ENCODE measurements at regions of chr19 and their contacts with region 1.

Region 1: DNA sequence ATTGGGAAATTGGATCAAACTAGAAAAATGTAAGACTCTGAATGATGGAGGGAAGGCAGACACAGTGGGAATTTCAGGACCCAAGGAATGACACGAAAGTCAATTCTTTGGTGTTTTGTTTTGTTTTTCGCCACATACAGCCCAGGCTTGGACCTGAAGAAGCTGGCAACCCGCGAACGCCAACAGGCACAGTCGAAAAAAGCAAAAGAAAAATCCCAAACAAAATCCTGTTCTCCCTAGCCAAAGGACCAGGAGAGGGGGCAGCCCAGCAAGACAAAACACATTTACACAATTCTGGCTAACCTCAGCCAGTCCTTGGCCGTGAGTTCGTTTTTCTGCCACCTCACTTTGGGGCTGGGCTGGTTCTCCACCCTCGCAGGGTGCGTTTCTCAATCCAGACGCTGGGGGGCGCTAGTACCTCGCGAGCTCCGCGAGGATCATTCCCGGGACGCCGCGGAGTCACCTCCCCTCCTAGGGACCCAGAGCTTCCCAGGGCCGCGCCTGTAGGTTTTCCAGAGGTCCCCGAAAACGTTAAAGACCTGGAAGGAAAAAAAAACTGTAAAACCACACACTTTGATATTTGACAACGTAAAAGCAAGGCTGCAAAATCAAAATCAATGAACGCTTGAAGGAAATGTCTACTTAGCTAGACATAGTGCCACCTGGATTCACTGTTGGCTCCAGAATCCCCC is 34.9 kb upstream of the TPM4 start:
- DNase-seq: peak; percentile 86
- CTCF ChIP-seq: peak; percentile 94

Region 2: GRCh38 chr19:15629003-15629880 is 412.2 kb before region 1 on chr19:
- in situ Hi-C with region 1: loop called (anchors 25 kb)
- DNase-seq: peak; percentile 90
- CTCF ChIP-seq: peak; percentile 94

Region 3: DNA sequence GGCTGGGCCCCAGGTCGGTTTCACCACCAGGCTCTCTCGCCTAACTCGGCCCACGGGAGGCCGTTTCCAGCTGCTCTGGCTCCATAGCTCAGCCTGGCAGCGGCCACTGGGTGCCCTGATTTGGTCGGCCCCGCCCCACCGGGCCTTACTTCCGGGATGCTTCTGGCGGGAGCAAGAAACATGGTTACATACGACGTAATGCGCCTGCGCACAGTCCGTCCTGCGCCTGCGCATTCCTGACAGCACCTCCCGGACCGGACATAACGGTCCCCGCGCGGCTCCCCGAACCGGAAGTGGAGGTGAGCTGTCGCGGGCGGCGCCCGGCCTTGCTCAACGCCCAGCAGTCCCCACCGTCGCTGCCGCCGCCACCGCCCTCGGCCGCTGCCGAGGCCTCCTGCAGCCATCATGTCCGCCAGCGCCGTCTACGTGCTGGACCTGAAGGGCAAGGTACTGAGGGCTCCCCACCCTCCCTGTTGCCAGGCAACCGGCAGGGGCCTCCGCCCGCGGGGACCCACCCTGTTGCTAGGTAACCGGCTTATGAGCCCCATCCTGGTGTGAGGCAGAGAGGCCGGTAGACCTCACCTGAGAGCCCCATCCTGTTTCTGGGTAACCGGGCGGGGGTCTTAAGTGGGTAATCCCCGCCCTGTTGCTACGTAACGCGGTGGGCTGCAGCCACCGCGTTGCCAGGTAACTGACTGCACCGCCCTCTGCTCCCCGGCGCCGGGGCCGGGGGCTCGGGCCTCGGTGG is 156.4 kb after region 1 on chr19 and contains the start of gene AP1M1:
- in situ Hi-C with region 1: loop called (anchors 10 kb)
- DNase-seq: peak; percentile 100
- CTCF ChIP-seq: no peak

Region 4: DNA sequence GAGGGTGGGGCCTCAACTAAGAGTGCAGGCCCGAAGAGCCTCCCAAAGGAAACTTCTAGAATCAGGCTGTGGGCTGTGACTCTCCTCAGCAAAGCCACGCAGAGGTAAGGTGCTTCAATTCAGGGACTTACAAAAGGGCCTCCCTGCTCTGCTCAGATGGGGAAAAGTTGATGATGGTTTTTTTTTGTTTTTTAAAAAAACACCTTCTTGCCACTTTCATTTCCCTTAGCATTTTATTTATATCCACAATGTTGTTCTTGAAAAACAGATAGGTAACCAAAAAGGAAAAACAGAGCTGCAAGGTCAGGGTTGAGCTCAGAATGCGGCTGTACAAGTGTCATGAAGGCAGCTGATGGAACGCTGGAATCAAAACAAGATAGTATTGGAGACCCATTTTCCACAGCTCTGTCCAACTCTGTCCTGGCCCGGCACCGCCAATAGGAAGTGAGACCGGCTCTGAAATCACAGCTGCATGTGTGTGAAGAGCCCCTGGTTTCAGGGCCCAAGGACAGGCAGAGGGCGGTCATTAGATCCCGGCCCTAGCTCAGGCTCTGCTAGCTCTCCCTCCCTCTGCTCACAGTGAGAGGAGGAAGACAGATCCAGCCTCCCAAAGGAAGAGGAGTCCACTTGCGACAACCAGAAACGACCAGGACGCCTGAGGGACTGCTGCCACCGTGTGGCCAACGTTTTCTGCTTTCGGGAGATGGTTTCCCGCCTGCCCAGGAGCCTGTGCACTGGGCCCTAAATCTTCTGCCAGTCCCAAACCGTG is 341.5 kb after region 1 on chr19:
- in situ Hi-C with region 1: loop called (anchors 25 kb)
- DNase-seq: peak; percentile 87
- CTCF ChIP-seq: peak; percentile 53

Region 5: DNA sequence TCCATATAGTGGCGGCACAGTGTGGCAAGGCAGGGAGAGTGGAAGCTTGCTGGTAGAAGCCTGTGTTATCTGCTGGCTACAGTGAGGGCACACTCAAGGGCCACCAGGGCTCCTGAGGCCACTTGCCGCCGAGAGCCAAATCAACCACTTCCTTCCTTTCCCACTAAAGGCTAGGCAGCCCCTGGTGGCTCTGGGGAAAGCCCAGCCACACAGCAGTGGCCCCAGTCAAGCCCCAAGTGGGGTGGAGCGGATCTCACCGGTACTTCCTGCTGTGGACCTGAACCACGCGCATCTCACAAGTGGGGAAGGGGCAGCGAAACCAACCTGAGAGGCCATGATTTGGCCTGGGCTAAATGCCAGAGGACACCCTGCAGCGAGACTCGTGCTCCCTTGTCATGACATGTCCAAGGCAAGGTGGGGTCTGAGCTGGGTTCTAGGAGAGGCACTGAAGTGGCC is 552.7 kb after region 1 on chr19:
- in situ Hi-C with region 1: no loop called
- DNase-seq: peak; percentile 61
- CTCF ChIP-seq: no peak

Measured in GM13976 (cell line).